ENCODE measurements at regions of chr3 and their contacts with region 1.

Region 1: DNA sequence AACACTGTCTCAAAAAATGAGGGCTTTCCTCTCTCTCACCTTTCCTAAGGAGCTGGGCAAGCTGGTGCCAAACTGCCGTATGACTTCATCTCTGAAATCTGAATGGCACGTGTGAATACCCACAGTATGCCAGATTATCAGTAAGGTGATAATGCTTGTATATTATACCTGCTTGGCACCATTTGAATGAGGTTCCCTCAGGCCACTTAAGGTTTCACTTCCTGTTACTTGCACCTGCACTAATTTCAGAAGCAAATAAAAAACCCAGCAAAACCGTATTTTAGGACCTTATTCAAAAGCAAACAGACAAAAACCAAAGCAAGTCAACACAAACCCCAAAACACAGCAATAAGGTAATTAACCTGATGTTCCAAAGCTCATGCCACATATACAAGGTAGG is 19.7 kb downstream of the FOXP1 start:
- DNase-seq: no peak
- ATAC-seq: peak; percentile 65
- H3K4me3 Mint-ChIP-seq: peak overlapping the region; percentile 20
- H3K27ac Mint-ChIP-seq: peak overlapping the region; percentile 59
- H3K4me1 Mint-ChIP-seq: peaks cover 69% of the 10 kb centered on the region
- H3K27me3 Mint-ChIP-seq: peaks cover 6% of the 10 kb centered on the region
- CTCF ChIP-seq: no peak

Region 2: GRCh38 chr3:71548705-71549384 is 15.0 kb before region 1 on chr3:
- CTCF ChIA-PET with region 1: no interaction called
- POLR2A ChIA-PET with region 1: interaction called, 8 read pairs
- intact Hi-C with region 1: loop called (anchors 2 kb)
- DNase-seq: no peak
- ATAC-seq: peak; percentile 70
- H3K4me3 Mint-ChIP-seq: no peak overlapping the region
- H3K27ac Mint-ChIP-seq: no peak overlapping the region
- H3K4me1 Mint-ChIP-seq: peaks cover 25% of the 10 kb centered on the region
- H3K27me3 Mint-ChIP-seq: no peaks in the 10 kb centered on the region
- CTCF ChIP-seq: no peak

Region 3: GRCh38 chr3:71577011-71577410 is 13.2 kb after region 1 on chr3:
- CTCF ChIA-PET with region 1: interaction called, 3 read pairs
- POLR2A ChIA-PET with region 1: interaction called, 21 read pairs
- intact Hi-C with region 1: loop called (anchors 1 kb)
- DNase-seq: no peak
- ATAC-seq: no peak
- H3K4me3 Mint-ChIP-seq: peak overlapping the region; percentile 64
- H3K27ac Mint-ChIP-seq: peak overlapping the region; percentile 78
- H3K4me1 Mint-ChIP-seq: peaks cover 56% of the 10 kb centered on the region
- H3K27me3 Mint-ChIP-seq: no peaks in the 10 kb centered on the region
- CTCF ChIP-seq: no peak

Measured in activated B cell treated with CpG ODN at 0.5 μM for 24 hours (primary cell).